ENCODE measurements at regions of chr5 and their contacts with region 1.

Region 1: DNA sequence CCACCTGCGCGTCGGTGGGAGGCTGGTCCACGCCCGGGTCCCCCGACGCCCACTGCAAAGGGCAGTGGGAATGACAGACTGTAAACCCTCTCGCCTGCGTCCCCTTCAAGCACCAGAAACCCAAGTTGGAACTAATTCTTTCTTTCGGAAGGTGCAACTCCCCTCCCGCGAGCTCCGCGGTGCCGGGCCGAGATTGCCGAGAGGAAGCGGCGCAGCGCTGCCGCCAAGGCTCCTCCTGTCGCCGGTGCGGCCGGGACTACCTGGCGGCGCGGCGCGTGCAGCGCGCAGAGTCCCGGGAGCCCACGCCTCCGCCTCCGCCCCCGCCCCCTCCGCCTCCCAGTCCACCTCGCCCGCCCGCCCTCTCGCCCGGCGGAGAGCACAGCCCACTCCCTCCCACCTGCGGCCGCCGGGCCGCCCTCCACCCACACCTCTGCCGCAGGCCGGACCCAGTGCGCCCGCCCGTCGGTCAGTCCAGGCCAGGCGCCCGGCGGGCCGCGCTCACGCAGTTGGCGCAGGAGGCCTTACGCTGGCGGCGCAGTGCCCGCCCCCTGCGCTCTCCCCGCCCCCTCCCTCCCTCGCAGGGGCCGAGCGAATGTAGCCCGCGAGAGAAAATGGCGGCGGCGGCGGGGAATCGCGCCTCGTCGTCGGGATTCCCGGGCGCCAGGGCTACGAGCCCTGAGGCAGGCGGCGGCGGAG is at the start of gene MAP3K1:
- DNase-seq: peak; percentile 62 to 92 (median 80)
- ATAC-seq: peak; percentile 71
- H3K4me3 ChIP-seq: peak within 1 kb of the TSS; percentile 61 to 93
- H3K4me3 Mint-ChIP-seq: peak within 1 kb of the TSS; percentile 90
- H3K27ac ChIP-seq: peak within 1 kb of the TSS; percentile 74 to 78
- H3K27ac Mint-ChIP-seq: peak within 1 kb of the TSS; percentile 93
- H3K4me1 ChIP-seq: peaks cover 24% of the 10 kb centered on the region
- H3K4me1 Mint-ChIP-seq: peaks cover 33% of the 10 kb centered on the region
- H3K27me3 ChIP-seq: no peaks in the 10 kb centered on the region
- H3K27me3 Mint-ChIP-seq: no peaks in the 10 kb centered on the region
- CTCF ChIP-seq: no peak
- total RNA-seq, gene MAP3K1: 19.1 TPM

Region 2: DNA sequence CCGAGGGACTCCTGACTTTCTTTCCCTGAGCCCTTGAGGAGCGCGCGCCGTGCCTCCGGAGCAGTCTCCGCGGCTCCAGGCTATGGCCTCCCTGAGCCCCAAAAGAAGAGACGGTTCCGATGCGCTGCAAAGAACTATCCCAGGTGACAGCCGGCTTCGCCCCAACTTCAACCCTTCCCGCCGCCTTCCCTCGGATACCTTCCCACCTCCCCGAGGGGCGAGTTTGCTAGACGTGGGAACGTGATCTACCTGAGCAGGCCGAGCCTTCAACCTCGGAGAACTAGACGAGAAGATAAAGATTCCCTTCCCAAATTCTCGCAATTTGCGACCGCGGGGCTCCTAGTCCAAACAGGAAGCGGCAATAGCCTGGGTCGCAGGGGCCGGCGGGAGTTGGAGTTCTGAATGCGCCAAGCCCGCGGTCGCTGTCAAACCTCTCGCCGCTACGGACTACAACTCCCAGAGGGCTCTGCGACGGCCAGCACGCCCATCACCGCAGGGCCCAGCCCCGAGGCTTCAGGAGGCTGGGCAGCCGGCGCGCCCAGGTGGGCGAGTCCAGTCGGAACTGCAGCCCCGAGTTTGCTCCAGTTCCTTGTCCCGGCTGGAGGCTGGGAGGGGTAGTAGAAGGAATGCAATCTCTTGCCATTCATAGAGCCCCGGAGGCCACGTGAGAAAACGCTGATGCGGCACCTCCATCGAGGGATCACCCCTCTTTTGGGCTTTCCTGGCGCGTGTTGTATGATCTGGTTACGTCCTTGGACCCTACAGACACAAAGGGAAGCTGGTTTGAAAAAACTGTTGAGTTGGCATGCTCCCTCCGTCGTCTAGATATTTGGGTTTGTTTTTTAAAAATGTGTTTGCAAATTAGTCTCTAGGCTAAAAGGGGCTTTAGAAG is 1102.9 kb before region 1 on chr5 and contains the start of gene SLC38A9:
- CTCF ChIA-PET with region 1: no interaction called
- POLR2A ChIA-PET with region 1: no interaction called
- intact Hi-C with region 1: loop called (anchors 5 kb)
- DNase-seq: peak; percentile 83 to 94 (median 91)
- ATAC-seq: peak; percentile 99
- H3K4me3 ChIP-seq: peak within 1 kb of the TSS; percentile 92 to 100
- H3K4me3 Mint-ChIP-seq: peak within 1 kb of the TSS; percentile 98
- H3K27ac ChIP-seq: peak within 1 kb of the TSS; percentile 54 to 73
- H3K27ac Mint-ChIP-seq: peak within 1 kb of the TSS; percentile 88
- H3K4me1 ChIP-seq: peaks cover 9% of the 10 kb centered on the region
- H3K4me1 Mint-ChIP-seq: peaks cover 31% of the 10 kb centered on the region
- H3K27me3 ChIP-seq: no peaks in the 10 kb centered on the region
- H3K27me3 Mint-ChIP-seq: peaks cover 3% of the 10 kb centered on the region
- CTCF ChIP-seq: no peak
- total RNA-seq, gene SLC38A9: 6.0 to 6.8 TPM

Region 3: GRCh38 chr5:56552612-56553268 is 262.4 kb before region 1 on chr5:
- CTCF ChIA-PET with region 1: no interaction called
- POLR2A ChIA-PET with region 1: no interaction called
- intact Hi-C with region 1: no loop called
- DNase-seq: no peak
- ATAC-seq: no peak
- H3K4me3 ChIP-seq: no peak overlapping the region
- H3K4me3 Mint-ChIP-seq: no peak overlapping the region
- H3K27ac ChIP-seq: no peak overlapping the region
- H3K27ac Mint-ChIP-seq: no peak overlapping the region
- H3K4me1 ChIP-seq: no peaks in the 10 kb centered on the region
- H3K4me1 Mint-ChIP-seq: no peaks in the 10 kb centered on the region
- H3K27me3 ChIP-seq: no peaks in the 10 kb centered on the region
- H3K27me3 Mint-ChIP-seq: peaks cover 4% of the 10 kb centered on the region
- CTCF ChIP-seq: no peak

Region 4: GRCh38 chr5:56696900-56697299 is 118.2 kb before region 1 on chr5:
- CTCF ChIA-PET with region 1: no interaction called
- POLR2A ChIA-PET with region 1: no interaction called
- intact Hi-C with region 1: loop called in 1 of 2 experiments (anchors 10 kb)
- DNase-seq: peak in 2 of 9 experiments; percentile 16 to 52
- ATAC-seq: no peak
- H3K4me3 ChIP-seq: no peak overlapping the region
- H3K4me3 Mint-ChIP-seq: no peak overlapping the region
- H3K27ac ChIP-seq: no peak overlapping the region
- H3K27ac Mint-ChIP-seq: no peak overlapping the region
- H3K4me1 ChIP-seq: peaks cover 25% of the 10 kb centered on the region
- H3K4me1 Mint-ChIP-seq: peaks cover 47% of the 10 kb centered on the region
- H3K27me3 ChIP-seq: no peaks in the 10 kb centered on the region
- H3K27me3 Mint-ChIP-seq: peaks cover 6% of the 10 kb centered on the region
- CTCF ChIP-seq: no peak

Region 5: DNA sequence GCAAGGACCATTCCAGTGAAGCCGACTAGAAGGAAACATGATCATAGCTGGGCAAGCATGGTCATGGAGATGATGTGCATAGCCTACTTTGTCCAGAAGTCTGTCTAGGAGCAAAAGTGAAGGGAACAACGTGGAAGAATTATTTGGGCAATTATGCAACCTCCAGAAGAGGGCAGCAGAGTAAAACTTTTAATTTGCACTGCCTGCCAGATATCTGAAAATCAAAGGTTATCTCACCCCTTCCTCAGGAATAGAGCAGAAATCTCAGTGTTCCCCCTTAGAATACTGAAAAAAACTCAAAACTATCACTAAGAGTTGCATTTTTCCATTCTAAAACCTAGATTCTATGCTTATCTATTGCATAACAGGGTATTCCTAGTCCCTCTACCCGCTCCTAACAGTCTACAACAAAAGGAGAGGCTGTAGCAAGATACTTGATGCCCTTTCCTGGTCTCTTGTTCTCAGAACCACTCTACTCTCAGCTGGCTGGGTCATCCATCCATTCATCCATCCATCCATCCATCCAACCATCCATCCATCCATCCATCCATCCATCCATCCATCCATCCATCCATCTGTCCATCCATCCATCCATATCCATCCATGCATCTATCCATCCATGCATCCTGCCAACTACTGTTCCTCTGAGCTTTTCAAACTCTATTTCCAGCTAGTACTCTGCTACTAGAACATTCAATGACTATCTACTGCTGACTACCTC is 85.9 kb after region 1 on chr5:
- CTCF ChIA-PET with region 1: no interaction called
- POLR2A ChIA-PET with region 1: no interaction called
- intact Hi-C with region 1: loop called in 1 of 2 experiments (anchors 2 kb)
- DNase-seq: peak in 7 of 9 experiments; percentile 12 to 73 (median 38)
- ATAC-seq: peak; percentile 65
- H3K4me3 ChIP-seq: no peak overlapping the region
- H3K4me3 Mint-ChIP-seq: no peak overlapping the region
- H3K27ac ChIP-seq: no peak overlapping the region
- H3K27ac Mint-ChIP-seq: no peak overlapping the region
- H3K4me1 ChIP-seq: no peaks in the 10 kb centered on the region
- H3K4me1 Mint-ChIP-seq: no peaks in the 10 kb centered on the region
- H3K27me3 ChIP-seq: no peaks in the 10 kb centered on the region
- H3K27me3 Mint-ChIP-seq: no peaks in the 10 kb centered on the region
- CTCF ChIP-seq: peak; percentile 84

Region 6: GRCh38 chr5:56986626-56986947 is 171.5 kb after region 1 on chr5:
- CTCF ChIA-PET with region 1: no interaction called
- POLR2A ChIA-PET with region 1: no interaction called
- intact Hi-C with region 1: no loop called
- DNase-seq: no peak
- ATAC-seq: no peak
- H3K4me3 ChIP-seq: no peak overlapping the region
- H3K4me3 Mint-ChIP-seq: no peak overlapping the region
- H3K27ac ChIP-seq: no peak overlapping the region
- H3K27ac Mint-ChIP-seq: no peak overlapping the region
- H3K4me1 ChIP-seq: peaks cover 9% of the 10 kb centered on the region
- H3K4me1 Mint-ChIP-seq: peaks cover 9% of the 10 kb centered on the region
- H3K27me3 ChIP-seq: no peaks in the 10 kb centered on the region
- H3K27me3 Mint-ChIP-seq: no peaks in the 10 kb centered on the region
- CTCF ChIP-seq: no peak

Region 7: DNA sequence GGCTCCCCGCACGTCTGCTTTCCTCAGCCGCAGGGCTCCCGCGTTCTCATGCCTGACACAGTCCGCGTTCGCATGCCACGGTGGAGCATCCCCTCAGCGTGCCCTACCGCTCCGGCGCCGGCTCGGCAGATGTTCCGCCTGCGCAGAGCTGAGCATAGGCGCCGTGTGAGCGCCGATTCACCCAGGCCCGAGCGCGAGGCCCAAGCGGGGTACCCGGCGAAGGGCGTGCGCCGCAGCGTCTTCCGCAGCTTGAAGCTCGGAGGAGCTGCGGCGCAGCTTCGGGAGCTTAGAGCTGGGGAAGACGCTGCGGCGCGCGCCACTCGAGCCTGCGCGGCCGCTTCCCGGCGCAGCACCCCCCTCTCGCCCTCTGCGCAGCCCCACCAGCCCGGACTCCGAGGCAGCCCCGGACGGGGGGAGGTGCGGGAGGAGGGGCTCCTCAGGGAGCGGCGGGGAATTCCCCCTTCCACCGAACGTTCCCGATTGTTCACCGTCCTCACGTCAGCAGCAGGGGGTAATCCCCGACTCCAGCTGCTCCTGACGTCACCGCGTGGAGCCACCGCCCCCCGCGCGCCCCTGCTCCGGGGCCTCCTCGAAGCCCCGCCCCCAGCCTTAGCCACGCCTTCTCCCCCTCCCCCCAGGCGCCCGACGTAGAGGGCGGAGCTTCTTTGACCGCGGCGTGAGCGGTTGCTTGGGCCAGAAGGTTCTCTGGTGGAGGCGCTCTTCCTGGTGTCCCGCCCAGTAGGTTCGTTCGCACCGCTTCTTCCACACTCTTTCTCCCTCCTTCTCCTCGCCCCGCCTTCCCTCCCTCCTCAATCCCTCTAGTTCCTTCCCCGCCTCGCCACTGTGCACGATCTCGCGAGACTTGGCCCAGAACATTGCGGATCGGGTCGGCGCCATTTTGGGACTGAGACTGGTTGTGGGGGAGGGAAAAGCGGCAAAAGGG is 358.3 kb after region 1 on chr5 and contains the start of gene GPBP1:
- CTCF ChIA-PET with region 1: no interaction called
- POLR2A ChIA-PET with region 1: no interaction called
- intact Hi-C with region 1: loop called (anchors 1 to 2 kb)
- DNase-seq: peak; percentile 95 to 100 (median 98)
- ATAC-seq: peak; percentile 74
- H3K4me3 ChIP-seq: peak within 1 kb of the TSS; percentile 87 to 100
- H3K4me3 Mint-ChIP-seq: peak within 1 kb of the TSS; percentile 96
- H3K27ac ChIP-seq: peak within 1 kb of the TSS; percentile 91 to 98
- H3K27ac Mint-ChIP-seq: peak within 1 kb of the TSS; percentile 98
- H3K4me1 ChIP-seq: peaks cover 18% of the 10 kb centered on the region
- H3K4me1 Mint-ChIP-seq: peaks cover 38% of the 10 kb centered on the region
- H3K27me3 ChIP-seq: no peaks in the 10 kb centered on the region
- H3K27me3 Mint-ChIP-seq: no peaks in the 10 kb centered on the region
- CTCF ChIP-seq: no peak
- total RNA-seq, gene GPBP1: 164 to 165 TPM

Measured in CD8-positive, alpha-beta T cell (primary cell).